ENCODE measurements at regions of chr14 and their contacts with region 1.

Region 1: GRCh38 chr14:50303744-50304471 is 8.1 kb downstream of the L2HGDH start:
- DNase-seq: peak; percentile 49 to 67 (median 60)
- ATAC-seq: peak; percentile 81
- H3K4me3 ChIP-seq: no peak overlapping the region
- H3K27ac ChIP-seq: no peak overlapping the region
- H3K4me1 ChIP-seq: no peaks in the 10 kb centered on the region
- H3K27me3 ChIP-seq: no peaks in the 10 kb centered on the region
- CTCF ChIP-seq: no peak
- POLR2A ChIP-seq: no peak

Region 2: GRCh38 chr14:50222061-50222613 is 81.8 kb before region 1 on chr14:
- intact Hi-C with region 1: loop called (anchors 5 kb)
- DNase-seq: no peak
- ATAC-seq: no peak
- H3K4me3 ChIP-seq: no peak overlapping the region
- H3K27ac ChIP-seq: no peak overlapping the region
- H3K4me1 ChIP-seq: peaks cover 28% of the 10 kb centered on the region
- H3K27me3 ChIP-seq: no peaks in the 10 kb centered on the region
- CTCF ChIP-seq: no peak
- POLR2A ChIP-seq: no peak